GM18951 (cell line): ENCODE measurements at regions of chr3 and their contacts with region 1.

Region 1: DNA sequence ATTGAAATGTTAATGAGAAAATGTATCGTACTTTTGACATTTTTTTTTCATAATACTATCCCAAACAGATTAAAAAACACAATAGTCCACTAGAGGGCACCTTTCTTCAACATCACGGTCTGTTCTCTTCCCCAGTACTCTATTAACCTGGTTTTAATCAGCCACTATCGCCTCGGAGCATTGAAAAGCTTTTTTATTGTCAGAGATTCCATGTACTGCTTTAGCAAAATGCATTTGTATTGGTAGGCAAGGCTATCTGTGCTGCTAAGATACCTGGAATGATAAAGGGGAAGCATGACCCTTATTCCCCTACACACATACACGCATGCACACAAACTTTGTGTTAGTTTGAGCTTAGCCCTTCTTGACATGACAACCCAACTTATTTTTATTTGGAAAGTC is 160.1 kb upstream of the IL12A start:
- POLR2A ChIP-seq: no peak

Region 2: GRCh38 chr3:159627634-159628033 is 200.9 kb before region 1 on chr3:
- in situ Hi-C with region 1: no loop called
- POLR2A ChIP-seq: no peak

Region 3: DNA sequence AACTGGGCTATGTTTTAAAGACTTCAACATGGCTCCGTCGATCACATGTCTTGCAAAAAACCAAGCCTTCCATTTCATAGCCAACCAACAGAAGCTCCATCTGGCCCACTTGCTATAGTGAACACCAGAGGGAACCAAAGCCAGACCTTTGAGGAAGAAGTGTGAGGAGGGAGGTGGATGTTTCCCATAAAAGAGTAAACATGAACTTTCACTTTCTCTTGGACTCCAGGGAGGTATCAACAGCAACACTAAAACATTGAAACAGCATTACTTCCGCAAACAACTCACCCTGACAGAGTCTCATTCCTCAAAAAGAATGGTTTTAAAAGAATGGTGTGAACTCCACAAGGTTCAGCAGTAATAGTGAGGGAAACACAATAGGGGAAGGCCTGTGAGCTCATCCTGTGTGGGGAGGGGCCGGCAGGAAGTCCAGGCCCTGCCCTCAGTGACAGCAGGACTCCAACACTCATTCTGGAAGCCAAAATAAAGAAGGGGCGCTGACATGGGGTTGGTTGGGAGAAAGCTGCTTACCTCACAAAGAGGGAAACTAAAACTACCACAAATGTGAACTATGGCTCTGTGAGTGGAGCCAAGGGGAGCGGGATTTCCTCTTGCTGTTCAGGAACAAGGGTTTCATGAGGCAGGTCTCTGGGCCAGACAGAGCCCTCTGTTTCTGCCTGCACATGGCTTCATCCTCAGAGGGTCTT is 101.0 kb after region 1 on chr3:
- in situ Hi-C with region 1: no loop called
- POLR2A ChIP-seq: no peak

Region 4: DNA sequence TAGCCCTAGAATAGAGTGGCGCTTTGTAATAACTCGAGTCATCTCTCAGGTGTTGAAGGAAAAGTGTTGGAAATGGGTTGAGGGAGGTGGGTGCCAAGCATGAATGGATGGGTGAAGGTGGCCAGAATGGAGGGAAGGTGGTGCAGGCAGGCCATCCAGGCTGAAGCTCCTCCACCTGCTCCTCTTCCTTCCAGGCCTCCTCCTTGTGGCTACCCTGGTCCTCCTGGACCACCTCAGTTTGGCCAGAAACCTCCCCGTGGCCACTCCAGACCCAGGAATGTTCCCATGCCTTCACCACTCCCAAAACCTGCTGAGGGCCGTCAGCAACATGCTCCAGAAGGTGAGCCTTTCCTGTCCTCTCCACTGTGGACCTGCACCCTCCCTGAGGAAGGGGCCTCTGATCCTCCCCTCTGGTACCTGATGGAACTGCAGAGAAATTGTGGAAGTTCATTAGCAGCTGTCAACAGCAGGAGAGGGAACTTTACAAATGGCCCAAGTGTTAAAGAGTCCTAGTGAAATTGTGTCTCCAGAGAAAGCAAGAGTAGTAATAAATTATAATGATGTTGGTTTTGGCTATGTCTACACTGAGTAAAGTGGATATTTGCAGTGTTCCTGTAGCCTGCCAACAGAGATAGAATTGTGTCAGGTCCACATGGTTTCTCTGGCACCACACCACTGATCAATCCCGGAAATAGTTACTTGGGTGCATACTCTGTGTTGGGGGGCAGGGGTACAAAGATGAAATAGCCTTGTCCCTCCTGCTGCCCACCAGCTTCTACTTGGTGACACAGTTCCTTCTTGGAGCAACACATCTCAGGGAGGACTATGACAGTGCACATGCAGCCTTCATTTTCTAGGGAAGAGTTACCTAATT is 161.7 kb after region 1 on chr3:
- in situ Hi-C with region 1: loop called (anchors 10 kb)
- POLR2A ChIP-seq: no peak